ENCODE measurements at regions of chr6 and their contacts with region 1.

Region 1: GRCh38 chr6:130885392-130886192 is 58.4 kb downstream of the SMLR1 start:
- DNase-seq: peak; percentile 79
- H3K4me3 ChIP-seq: no peak overlapping the region
- H3K27ac ChIP-seq: no peak overlapping the region
- H3K4me1 ChIP-seq: peaks cover 5% of the 10 kb centered on the region
- H3K27me3 ChIP-seq: no peaks in the 10 kb centered on the region
- CTCF ChIP-seq: peak; percentile 54 to 65
- POLR2A ChIP-seq: no peak

Region 2: GRCh38 chr6:130872250-130873095 is 13.1 kb before region 1 on chr6:
- CTCF ChIA-PET with region 1: interaction called, 24 read pairs
- POLR2A ChIA-PET with region 1: no interaction called
- dilution Hi-C with region 1: no loop called
- intact Hi-C with region 1: no loop called
- DNase-seq: peak; percentile 51
- H3K4me3 ChIP-seq: no peak overlapping the region
- H3K27ac ChIP-seq: no peak overlapping the region
- H3K4me1 ChIP-seq: no peaks in the 10 kb centered on the region
- H3K27me3 ChIP-seq: no peaks in the 10 kb centered on the region
- CTCF ChIP-seq: peak; percentile 85 to 90
- POLR2A ChIP-seq: no peak

Region 3: DNA sequence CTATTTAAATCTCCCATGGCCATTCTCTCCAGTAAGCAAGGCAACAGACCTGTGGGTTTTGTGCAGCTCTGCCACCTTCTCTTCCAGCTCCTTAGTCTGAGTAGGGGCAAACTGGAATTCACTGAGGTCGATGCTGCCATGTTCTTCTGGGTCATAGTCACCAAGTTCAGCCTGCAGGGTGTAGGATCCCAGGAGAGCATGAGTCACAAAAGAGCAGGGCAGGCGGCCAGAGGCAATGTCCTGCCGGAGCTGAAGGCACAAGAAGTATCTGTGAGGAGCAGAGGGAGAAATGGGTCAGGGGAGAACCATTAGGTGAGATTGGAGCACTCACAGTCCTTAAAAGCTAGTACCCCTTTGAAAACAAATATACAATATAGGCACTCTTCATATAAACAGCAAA is 15.3 kb after region 1 on chr6:
- CTCF ChIA-PET with region 1: interaction called, 15 read pairs
- POLR2A ChIA-PET with region 1: no interaction called
- dilution Hi-C with region 1: no loop called
- intact Hi-C with region 1: no loop called
- DNase-seq: no peak
- H3K4me3 ChIP-seq: no peak overlapping the region
- H3K27ac ChIP-seq: no peak overlapping the region
- H3K4me1 ChIP-seq: no peaks in the 10 kb centered on the region
- H3K27me3 ChIP-seq: no peaks in the 10 kb centered on the region
- CTCF ChIP-seq: no peak
- POLR2A ChIP-seq: no peak

Region 4: DNA sequence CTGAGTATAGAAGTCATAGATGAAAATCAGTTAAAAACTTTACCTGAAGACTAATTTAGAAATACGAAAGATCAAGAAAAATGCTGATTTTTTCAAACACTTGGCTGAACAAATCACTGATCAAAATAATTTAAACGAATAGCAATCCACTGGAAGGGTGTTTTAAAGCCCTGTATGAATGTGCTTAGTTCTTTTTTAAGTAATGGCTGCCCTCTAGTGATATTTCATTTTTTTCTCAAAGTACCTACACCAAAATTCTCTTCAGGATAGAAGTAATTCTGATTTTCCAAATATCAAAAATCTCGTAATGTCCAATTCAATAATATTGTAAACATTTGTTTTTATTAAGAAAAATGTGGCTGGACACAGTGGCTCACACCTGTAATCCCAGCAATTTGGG is 282.2 kb after region 1 on chr6:
- CTCF ChIA-PET with region 1: interaction called, 26 read pairs
- POLR2A ChIA-PET with region 1: no interaction called
- dilution Hi-C with region 1: no loop called
- intact Hi-C with region 1: no loop called
- DNase-seq: no peak
- H3K4me3 ChIP-seq: no peak overlapping the region
- H3K27ac ChIP-seq: no peak overlapping the region
- H3K4me1 ChIP-seq: no peaks in the 10 kb centered on the region
- H3K27me3 ChIP-seq: no peaks in the 10 kb centered on the region
- CTCF ChIP-seq: no peak
- POLR2A ChIP-seq: no peak

Region 5: DNA sequence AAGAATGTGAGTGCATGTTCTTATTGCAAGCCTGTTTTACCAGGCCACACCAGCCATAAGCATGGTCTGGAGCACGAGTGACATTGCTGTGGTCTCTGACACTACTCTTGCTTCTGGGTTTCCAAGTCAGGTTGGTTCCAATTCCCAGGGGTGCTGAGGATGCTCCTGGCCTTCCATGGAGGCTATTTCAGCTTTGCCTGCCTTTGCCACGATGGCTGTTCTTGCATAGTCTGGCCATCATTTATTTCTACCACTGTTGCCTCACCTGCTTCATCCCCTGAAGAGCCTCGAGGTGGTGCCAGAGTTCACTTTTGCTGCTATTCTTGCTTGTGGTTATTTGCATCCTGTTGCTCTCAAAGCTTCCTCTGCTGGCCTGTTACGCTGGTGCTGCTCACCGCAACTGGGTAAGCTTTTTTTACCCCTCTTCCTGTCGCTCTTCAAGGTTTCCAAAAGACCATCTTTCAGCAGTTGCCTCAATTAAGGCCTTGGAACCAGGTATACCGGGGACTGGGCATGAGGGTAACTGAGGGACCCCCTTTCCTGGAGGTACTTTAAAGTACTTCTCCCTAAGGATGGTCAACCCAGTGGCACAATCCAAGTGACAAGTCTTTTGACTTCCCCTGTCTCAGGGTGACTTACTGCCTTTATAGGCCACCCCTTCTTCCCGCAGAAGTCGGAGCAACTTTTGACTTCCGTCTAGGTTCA is 314.1 kb after region 1 on chr6:
- CTCF ChIA-PET with region 1: interaction called, 15 read pairs
- POLR2A ChIA-PET with region 1: no interaction called
- dilution Hi-C with region 1: no loop called
- intact Hi-C with region 1: loop called (anchors 10 kb)
- DNase-seq: peak; percentile 43
- H3K4me3 ChIP-seq: no peak overlapping the region
- H3K27ac ChIP-seq: no peak overlapping the region
- H3K4me1 ChIP-seq: no peaks in the 10 kb centered on the region
- H3K27me3 ChIP-seq: no peaks in the 10 kb centered on the region
- CTCF ChIP-seq: peak; percentile 52 to 57
- POLR2A ChIP-seq: no peak

Region 6: GRCh38 chr6:131519670-131520436 is 634.3 kb after region 1 on chr6:
- CTCF ChIA-PET with region 1: interaction called, 10 read pairs
- POLR2A ChIA-PET with region 1: no interaction called
- dilution Hi-C with region 1: no loop called
- intact Hi-C with region 1: no loop called
- DNase-seq: peak; percentile 54
- H3K4me3 ChIP-seq: no peak overlapping the region
- H3K27ac ChIP-seq: no peak overlapping the region
- H3K4me1 ChIP-seq: no peaks in the 10 kb centered on the region
- H3K27me3 ChIP-seq: no peaks in the 10 kb centered on the region
- CTCF ChIP-seq: peak; percentile 49 to 65
- POLR2A ChIP-seq: no peak

Region 7: GRCh38 chr6:131532580-131533039 is 647.0 kb after region 1 on chr6:
- CTCF ChIA-PET with region 1: interaction called, 40 read pairs
- POLR2A ChIA-PET with region 1: no interaction called
- dilution Hi-C with region 1: no loop called
- intact Hi-C with region 1: loop called (anchors 1 kb)
- DNase-seq: no peak
- H3K4me3 ChIP-seq: no peak overlapping the region
- H3K27ac ChIP-seq: no peak overlapping the region
- H3K4me1 ChIP-seq: no peaks in the 10 kb centered on the region
- H3K27me3 ChIP-seq: peaks cover 0 to 6% of the 10 kb centered on the region in 2 experiments
- CTCF ChIP-seq: no peak
- POLR2A ChIP-seq: no peak